GM23248 (cell line): ENCODE measurements at regions of chr3 and their contacts with region 1.

Region 1: GRCh38 chr3:169179321-169179720 is 484.2 kb downstream of the MECOM start:
- DNase-seq: no peak
- H3K4me3 ChIP-seq: no peak overlapping the region
- H3K27ac ChIP-seq: no peak overlapping the region
- H3K4me1 ChIP-seq: no peaks in the 10 kb centered on the region
- H3K27me3 ChIP-seq: peaks cover under 1% of the 10 kb centered on the region; the same call in 1 of the 2 replicates

Region 2: GRCh38 chr3:168213920-168214319 is 965.4 kb before region 1 on chr3:
- in situ Hi-C with region 1: loop called (anchors 25 kb)
- DNase-seq: peak; percentile 9
- H3K4me3 ChIP-seq: no peak overlapping the region
- H3K27ac ChIP-seq: no peak overlapping the region
- H3K4me1 ChIP-seq: no peaks in the 10 kb centered on the region
- H3K27me3 ChIP-seq: no peaks in the 10 kb centered on the region; the same call in 1 of the 2 replicates

Region 3: DNA sequence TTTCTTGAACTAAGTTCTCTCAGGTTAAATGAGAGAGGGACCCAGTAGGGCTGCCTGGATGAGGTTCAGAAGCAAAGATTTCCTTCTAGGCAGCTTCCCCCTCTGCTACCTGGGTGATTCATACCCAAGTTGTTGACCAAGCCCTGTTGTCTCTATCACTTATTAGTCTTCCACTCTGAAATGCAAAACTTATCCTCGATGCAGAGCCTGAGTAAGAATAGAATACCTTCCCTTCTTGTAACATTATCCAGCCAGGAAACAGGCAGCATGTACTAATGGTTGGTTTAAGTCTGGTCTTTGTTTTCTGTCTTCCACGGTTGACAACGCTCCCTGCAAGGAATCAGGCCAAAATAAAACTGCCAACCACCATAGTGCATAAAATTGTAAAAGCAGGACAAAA is 106.9 kb after region 1 on chr3:
- in situ Hi-C with region 1: no loop called
- DNase-seq: no peak
- H3K4me3 ChIP-seq: no peak overlapping the region
- H3K27ac ChIP-seq: no peak overlapping the region
- H3K4me1 ChIP-seq: no peaks in the 10 kb centered on the region
- H3K27me3 ChIP-seq: no peaks in the 10 kb centered on the region; the same call in 1 of the 2 replicates